Activated CD4-positive, alpha-beta memory T cell treated with anti-CD3 and anti-CD28 coated beads, Interleukin-2, amount 10 ng/mL, durations not matched to agents 7 days and 5 days (primary cell): ENCODE measurements at regions of chr10 and their contacts with region 1.

Region 1: GRCh38 chr10:102072673-102073527 is 7.8 kb downstream of the HPS6 start:
- DNase-seq: peak; percentile 83
- H3K4me3 Mint-ChIP-seq: no peak overlapping the region
- H3K27ac Mint-ChIP-seq: no peak overlapping the region
- H3K4me1 Mint-ChIP-seq: peaks cover 2% of the 10 kb centered on the region
- H3K27me3 Mint-ChIP-seq: peaks cover 2% of the 10 kb centered on the region

Region 2: GRCh38 chr10:101830322-101831168 is 242.4 kb before region 1 on chr10:
- CTCF ChIA-PET with region 1: interaction called, 11 read pairs
- POLR2A ChIA-PET with region 1: interaction called, 3 read pairs
- DNase-seq: peak; percentile 90
- H3K4me3 Mint-ChIP-seq: peak overlapping the region; percentile 76
- H3K27ac Mint-ChIP-seq: peak overlapping the region; percentile 87
- H3K4me1 Mint-ChIP-seq: peaks cover 56% of the 10 kb centered on the region
- H3K27me3 Mint-ChIP-seq: no peaks in the 10 kb centered on the region

Region 3: DNA sequence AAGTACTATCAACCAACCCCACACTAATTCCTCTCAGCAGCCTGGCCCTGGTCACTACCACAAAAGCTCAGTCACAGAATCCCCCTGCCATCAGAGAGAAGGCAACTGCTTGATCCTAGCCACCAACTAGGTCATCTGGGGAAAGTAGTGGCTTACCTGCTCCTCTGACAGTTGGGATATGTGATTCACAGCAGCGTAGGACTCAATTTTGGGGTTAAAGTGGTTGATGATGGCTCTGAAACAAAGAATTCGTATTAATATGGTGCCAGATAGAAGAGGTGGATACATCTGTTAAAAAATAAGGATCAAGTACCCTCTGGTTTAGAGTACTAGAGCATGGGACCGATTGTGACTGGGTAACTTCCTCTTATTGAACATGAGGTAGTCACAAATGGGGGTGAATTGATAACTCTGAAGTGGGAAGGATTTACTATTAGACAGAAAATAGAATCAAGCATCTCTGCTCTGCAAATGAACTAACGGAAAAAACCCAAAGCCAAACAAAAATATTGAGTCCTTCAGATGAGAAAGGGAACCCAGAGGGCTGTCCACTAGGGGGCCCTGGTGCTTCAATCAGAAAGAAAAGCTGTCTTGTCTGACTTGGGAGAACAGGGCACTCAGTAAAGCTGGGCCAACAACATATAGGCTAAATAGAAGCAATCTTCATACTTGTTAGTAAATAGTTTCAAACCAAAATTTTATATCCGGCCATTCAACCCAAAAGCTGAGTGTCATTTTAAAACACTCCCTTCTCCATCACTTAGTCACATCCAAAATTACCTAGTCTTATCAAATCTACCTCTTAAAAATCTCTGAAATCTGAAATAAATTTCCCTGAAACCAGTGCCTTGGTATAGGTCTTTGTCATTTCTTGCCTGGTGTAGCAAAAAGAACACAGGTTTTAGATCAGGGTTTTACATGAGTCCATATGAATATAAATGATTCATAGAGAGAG is 183.4 kb before region 1 on chr10:
- CTCF ChIA-PET with region 1: interaction called, 26 read pairs
- POLR2A ChIA-PET with region 1: no interaction called
- DNase-seq: peak; percentile 74
- H3K4me3 Mint-ChIP-seq: no peak overlapping the region
- H3K27ac Mint-ChIP-seq: no peak overlapping the region
- H3K4me1 Mint-ChIP-seq: peaks cover 14% of the 10 kb centered on the region
- H3K27me3 Mint-ChIP-seq: no peaks in the 10 kb centered on the region

Region 4: DNA sequence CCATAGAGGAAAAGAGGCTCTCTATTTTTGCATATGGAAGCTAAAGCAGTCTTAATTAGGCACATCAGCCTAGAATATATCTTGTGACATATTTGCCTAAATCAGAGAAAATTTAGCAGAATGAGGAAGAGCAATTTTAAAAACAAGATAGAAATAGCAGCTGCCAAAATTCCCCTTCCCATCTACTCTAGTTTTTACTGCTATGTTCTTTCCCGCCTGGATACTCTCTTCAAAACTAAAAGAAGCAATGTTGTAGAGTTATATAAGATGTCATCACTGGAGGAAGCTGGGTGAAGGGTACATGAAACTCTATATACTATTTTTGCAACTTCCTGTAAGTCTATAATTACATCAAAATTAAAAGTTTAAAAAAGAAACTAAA is 104.0 kb before region 1 on chr10:
- CTCF ChIA-PET with region 1: no interaction called
- POLR2A ChIA-PET with region 1: no interaction called
- DNase-seq: no peak
- H3K4me3 Mint-ChIP-seq: no peak overlapping the region
- H3K27ac Mint-ChIP-seq: peak overlapping the region; percentile 12
- H3K4me1 Mint-ChIP-seq: peaks cover 26% of the 10 kb centered on the region
- H3K27me3 Mint-ChIP-seq: no peaks in the 10 kb centered on the region

Region 5: GRCh38 chr10:102009801-102010425 is 63.0 kb before region 1 on chr10:
- CTCF ChIA-PET with region 1: interaction called, 14 read pairs
- POLR2A ChIA-PET with region 1: no interaction called
- DNase-seq: peak; percentile 42
- H3K4me3 Mint-ChIP-seq: no peak overlapping the region
- H3K27ac Mint-ChIP-seq: no peak overlapping the region
- H3K4me1 Mint-ChIP-seq: no peaks in the 10 kb centered on the region
- H3K27me3 Mint-ChIP-seq: no peaks in the 10 kb centered on the region

Region 6: GRCh38 chr10:102055647-102056419 is 17.1 kb before region 1 on chr10 and contains the start of gene ARMH3:
- CTCF ChIA-PET with region 1: interaction called, 14 read pairs
- POLR2A ChIA-PET with region 1: interaction called, 47 read pairs
- DNase-seq: peak; percentile 93
- H3K4me3 Mint-ChIP-seq: peak within 1 kb of the TSS; percentile 99
- H3K27ac Mint-ChIP-seq: peak within 1 kb of the TSS; percentile 86
- H3K4me1 Mint-ChIP-seq: peaks cover 39% of the 10 kb centered on the region
- H3K27me3 Mint-ChIP-seq: no peaks in the 10 kb centered on the region
- total RNA-seq, gene ARMH3: 22.8 to 23.9 TPM

Region 7: DNA sequence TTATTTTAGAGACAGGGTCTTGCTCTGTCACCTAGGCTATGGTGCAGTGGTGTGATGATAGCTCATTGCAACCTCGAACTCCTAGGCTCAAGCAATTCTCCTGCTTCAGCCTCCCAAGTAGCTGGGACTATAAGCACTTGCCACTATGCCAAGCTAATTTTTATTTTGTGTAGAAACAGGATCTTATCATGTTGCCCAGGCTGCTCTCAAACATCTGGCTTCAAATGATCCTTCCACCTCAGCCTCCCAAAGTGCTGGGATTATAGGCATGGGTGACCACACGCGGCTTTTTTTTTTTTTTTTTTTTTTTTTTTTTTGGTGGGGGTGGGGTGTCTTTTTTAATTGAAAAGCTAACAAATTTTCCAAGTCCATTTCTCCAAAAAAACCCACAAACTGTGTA is 10.6 kb after region 1 on chr10:
- CTCF ChIA-PET with region 1: interaction called, 21 read pairs
- POLR2A ChIA-PET with region 1: interaction called, 4 read pairs
- DNase-seq: no peak
- H3K4me3 Mint-ChIP-seq: no peak overlapping the region
- H3K27ac Mint-ChIP-seq: no peak overlapping the region
- H3K4me1 Mint-ChIP-seq: no peaks in the 10 kb centered on the region
- H3K27me3 Mint-ChIP-seq: no peaks in the 10 kb centered on the region

Region 8: DNA sequence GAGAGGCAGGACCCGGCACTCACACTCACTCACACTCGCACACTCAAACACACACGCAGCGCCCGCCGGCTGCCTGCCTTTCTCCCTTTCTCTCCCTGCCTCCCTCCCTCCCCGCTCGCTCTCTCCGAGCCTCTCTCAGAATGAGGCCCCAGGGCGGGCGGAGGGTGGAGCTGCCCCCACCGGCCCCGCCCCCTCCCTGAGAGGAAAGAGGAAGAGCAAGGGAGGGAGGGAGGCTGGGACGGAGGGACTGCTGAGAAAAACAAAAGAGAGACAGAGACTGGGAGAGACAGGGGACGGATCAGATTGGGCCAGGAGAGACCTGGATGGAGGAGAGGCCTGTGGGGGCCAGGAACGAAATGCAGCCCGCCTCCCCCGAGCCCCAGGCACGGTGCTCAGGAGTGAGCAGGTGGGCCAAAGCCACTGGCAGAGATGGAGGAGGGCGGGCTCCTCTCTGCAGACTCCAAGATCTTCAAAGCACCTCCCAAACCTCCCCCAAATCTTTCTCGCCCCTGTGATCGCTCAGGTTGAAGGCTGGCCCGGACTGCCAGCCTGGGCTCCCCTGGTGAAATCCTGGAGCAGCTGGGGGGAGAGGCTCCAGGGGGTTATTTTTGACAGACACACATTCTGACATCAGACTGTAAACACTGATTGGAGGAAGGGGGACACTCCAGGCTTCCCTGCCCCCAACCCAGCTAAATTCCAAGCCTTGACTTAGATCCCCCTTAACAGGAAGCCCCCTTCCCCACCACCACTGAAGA is 42.1 kb after region 1 on chr10:
- CTCF ChIA-PET with region 1: interaction called, 12 read pairs
- POLR2A ChIA-PET with region 1: interaction called, 5 read pairs
- DNase-seq: peak; percentile 91
- H3K4me3 Mint-ChIP-seq: peak overlapping the region; percentile 76
- H3K27ac Mint-ChIP-seq: peak overlapping the region; percentile 91
- H3K4me1 Mint-ChIP-seq: peaks cover 63% of the 10 kb centered on the region
- H3K27me3 Mint-ChIP-seq: no peaks in the 10 kb centered on the region

Region 9: GRCh38 chr10:102220612-102221011 is 147.7 kb after region 1 on chr10:
- CTCF ChIA-PET with region 1: no interaction called
- POLR2A ChIA-PET with region 1: no interaction called
- DNase-seq: no peak
- H3K4me3 Mint-ChIP-seq: no peak overlapping the region
- H3K27ac Mint-ChIP-seq: no peak overlapping the region
- H3K4me1 Mint-ChIP-seq: peaks cover 3% of the 10 kb centered on the region
- H3K27me3 Mint-ChIP-seq: peaks cover 24% of the 10 kb centered on the region